Brain microvascular endothelial cell (primary cell): ENCODE measurements at regions of chr5 and their contacts with region 1.

Region 1: DNA sequence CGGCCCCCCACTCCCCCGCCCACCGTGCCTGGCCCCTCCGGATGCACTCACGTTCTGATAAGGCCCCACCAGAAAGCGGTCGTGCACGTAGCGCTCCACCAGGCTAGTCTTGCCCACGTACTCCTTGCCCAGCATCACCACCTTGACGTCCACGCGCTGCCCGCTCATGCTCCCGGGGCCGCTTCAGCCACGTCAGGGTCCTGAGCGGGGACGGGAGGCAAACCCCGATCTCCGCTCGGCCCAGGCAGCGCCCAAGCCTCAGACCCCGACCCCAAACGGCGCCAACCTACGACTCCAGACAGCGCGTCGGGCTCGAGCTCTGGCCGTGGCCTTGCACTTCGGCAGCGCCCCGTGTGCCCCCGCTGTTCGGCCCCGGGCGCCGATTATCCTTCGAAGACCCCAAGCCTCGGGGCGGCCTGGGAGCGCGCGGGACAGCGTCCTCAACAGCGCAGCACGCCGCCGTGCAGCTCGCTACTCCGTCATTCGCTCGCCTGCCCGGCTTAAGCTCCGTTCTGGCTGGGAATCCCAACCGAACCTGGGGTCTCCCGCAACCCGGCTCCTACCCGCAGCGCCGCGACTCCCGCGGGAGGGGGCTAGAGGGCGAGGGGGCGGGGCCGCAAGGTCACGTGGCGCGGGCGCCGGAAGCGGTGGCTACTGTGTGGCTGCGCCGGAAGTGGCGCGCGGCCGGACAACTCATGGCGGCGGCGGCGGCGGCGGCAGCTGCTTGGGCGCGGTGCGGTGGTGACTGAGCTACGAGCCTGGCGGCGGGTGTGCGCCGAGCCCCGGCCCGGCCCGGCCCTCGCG is at the starts of genes PRELID1 and RAB24:
- DNase-seq: peak; percentile 76
- H3K4me3 ChIP-seq: peak within 1 kb of the TSS; percentile 97
- H3K27ac ChIP-seq: peak within 1 kb of the TSS; percentile 78
- H3K27me3 ChIP-seq: no peaks in the 10 kb centered on the region
- CTCF ChIP-seq: peak; percentile 42

Region 2: GRCh38 chr5:177194274-177194673 is 109.0 kb before region 1 on chr5:
- in situ Hi-C with region 1: no loop called
- DNase-seq: peak; percentile 84
- H3K4me3 ChIP-seq: no peak overlapping the region
- H3K27ac ChIP-seq: peak overlapping the region; percentile 83
- H3K27me3 ChIP-seq: no peaks in the 10 kb centered on the region
- CTCF ChIP-seq: no peak

Region 3: DNA sequence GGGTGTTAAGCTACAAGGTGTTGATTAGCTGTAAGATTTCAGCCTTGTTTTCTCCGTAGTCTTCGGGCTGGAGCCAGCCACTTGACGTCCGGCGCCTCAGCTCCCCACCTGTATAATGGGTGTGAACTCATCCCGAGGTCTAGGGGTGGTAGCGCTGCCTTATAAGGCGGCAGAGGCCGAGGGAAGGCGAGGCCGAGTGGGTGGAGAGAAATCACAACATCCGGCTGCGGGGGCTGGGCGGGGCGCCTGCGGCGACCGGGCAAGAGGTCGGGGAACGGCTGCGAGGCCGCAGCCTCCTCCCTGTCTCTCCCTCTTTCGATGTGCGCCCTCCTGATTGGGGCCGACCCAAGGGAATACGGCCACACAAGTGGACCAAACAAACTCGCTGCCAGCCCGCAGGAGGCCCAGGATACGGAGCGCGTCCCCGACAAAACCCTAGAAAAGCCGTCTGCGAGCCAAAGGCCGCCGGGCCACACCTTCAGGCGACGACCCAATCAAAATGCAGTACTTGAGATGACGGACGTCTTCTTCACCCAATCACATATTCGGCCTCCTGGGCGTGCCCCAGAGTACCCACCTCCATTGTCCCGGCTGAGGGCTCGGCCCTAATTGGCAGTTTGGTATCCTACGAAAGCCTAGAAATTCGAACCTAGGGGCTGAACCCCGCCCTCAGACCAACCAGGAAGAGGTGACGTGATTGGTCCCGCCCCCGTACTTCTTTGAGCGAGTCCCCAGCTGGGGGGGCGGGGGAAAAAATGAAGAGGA is 122.7 kb after region 1 on chr5:
- in situ Hi-C with region 1: loop called (anchors 25 kb)
- DNase-seq: peak; percentile 100
- H3K4me3 ChIP-seq: peak overlapping the region; percentile 66
- H3K27ac ChIP-seq: peak overlapping the region; percentile 89
- H3K27me3 ChIP-seq: no peaks in the 10 kb centered on the region
- CTCF ChIP-seq: no peak

Region 4: DNA sequence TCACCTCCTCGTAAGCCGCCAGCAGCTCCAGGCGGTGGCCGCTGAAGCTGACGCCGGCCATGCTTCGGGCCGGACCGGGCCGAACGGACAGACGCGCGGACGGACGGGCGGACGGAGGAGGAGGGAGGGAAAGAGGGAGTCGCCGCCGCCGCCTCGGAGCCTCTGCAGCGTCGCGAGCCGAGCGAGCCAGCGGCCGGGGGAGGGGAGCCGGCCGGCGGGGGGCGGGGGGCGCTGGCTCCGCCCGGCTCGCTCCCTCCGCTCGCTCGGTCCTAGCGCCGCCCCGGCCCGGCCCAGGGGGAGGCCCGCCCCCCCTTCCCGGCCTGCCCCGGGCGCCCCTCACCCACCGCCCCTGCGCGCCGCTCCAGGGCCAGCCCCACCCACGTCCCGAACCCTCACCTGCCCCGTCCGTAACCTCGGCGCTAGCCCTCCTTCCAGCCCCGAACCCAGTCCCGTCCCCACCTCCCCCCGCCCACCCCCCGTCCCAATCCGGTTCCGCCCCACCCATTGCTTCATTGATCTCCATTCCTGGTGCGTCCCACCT is 170.2 kb after region 1 on chr5 and contains the start of gene DBN1:
- in situ Hi-C with region 1: no loop called
- DNase-seq: peak; percentile 16
- H3K4me3 ChIP-seq: peak within 1 kb of the TSS; percentile 90
- H3K27ac ChIP-seq: peak within 1 kb of the TSS; percentile 73
- H3K27me3 ChIP-seq: no peaks in the 10 kb centered on the region
- CTCF ChIP-seq: no peak